Posterior vena cava (tissue), 2 donors: ENCODE measurements at regions of chr2 and their contacts with region 1.

Region 1: GRCh38 chr2:6325616-6326015 is 540.1 kb downstream of the CMPK2 start:
- DNase-seq: no peak

Region 2: GRCh38 chr2:5926871-5927512 is 398.6 kb before region 1 on chr2:
- intact Hi-C with region 1: no loop called
- DNase-seq: no peak

Region 3: GRCh38 chr2:7392076-7392787 is 1066.6 kb after region 1 on chr2:
- intact Hi-C with region 1: loop called in 1 of 2 experiments (anchors 5 kb)
- DNase-seq: no peak